HAP-1 (cell line): ENCODE measurements at regions of chr12 and their contacts with region 1.

Region 1: DNA sequence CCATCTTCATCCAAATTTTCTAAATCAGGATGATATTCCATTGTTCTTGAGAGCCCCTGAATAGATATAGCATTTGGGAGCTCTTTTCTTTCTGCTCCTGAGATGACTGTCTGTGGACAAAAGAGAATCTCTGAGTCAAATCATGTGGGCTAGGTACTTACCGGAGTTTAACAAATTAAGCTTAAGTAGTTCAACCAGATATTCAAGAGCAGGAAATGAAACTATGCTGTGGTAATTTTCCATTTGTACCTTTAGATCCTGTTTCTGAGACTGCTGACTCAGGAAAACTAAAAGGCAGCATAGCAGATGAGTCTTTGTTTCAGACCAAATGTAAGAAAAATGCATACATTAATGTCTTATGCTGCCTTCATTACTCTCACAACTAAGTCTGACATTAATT is at the start of gene CLEC7A:
- DNase-seq: no peak
- H3K4me3 ChIP-seq: no peak within 1 kb of the TSS
- H3K4me1 ChIP-seq: peaks cover 33% of the 10 kb centered on the region
- H3K27me3 ChIP-seq: no peaks in the 10 kb centered on the region

Region 2: GRCh38 chr12:9741726-9742125 is 388.3 kb before region 1 on chr12:
- in situ Hi-C with region 1: loop called (anchors 10 kb)
- DNase-seq: no peak
- H3K4me3 ChIP-seq: no peak overlapping the region
- H3K4me1 ChIP-seq: peaks cover 4% of the 10 kb centered on the region; the same call in 1 of the 2 replicates
- H3K27me3 ChIP-seq: no peaks in the 10 kb centered on the region

Region 3: DNA sequence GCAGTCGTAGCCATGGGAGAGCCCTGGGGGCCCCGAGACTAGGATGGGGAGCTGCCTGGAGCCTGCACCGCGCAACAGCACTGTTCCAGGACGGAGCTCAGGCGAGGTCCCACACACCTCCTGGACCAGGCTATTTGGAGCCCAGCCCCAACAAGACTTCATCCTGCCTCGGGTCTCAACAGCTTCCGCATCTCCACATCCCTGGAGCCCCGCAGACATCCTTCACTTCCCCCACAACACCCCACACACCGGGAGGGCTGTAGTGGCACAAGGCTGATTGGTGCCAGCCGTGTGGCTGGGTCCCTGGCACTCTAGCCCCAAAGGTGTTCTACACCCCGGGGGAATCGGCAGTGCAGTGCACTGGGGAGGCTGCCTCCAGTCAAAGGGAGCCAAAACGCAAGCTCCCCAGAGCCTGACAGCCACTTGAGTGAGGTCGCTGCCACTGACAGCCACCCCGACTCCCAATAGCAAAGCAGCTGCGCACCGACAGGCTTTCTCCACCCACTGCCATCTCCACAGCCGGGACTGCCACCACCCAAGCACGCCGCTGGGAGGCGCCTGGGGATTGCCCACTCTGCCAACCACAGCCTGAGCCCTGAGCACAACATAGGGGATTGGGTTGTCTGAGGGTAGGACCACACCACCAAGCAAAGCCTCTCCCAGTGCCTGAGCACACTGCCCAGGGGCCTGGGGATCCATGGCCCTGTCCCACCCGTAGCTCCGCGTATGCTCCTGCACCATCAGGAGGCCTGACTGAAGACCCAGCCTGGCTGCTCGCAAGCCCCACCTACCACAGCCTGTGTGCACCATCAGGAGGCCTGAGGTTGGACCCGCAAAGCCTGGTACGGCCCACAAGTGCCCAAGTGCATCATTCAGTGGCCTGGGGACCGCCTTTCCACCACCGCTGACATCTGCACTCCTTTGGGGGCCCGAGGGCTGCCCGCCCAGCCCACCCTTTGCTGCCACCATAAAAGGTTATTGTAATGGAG is 315.9 kb before region 1 on chr12:
- in situ Hi-C with region 1: no loop called
- DNase-seq: peak; percentile 49 to 91
- H3K4me3 ChIP-seq: peak overlapping the region; percentile 18
- H3K4me1 ChIP-seq: peaks cover 5% of the 10 kb centered on the region
- H3K27me3 ChIP-seq: no peaks in the 10 kb centered on the region